RWPE1 (cell line): ENCODE measurements at regions of chr10 and their contacts with region 1.

Region 1: DNA sequence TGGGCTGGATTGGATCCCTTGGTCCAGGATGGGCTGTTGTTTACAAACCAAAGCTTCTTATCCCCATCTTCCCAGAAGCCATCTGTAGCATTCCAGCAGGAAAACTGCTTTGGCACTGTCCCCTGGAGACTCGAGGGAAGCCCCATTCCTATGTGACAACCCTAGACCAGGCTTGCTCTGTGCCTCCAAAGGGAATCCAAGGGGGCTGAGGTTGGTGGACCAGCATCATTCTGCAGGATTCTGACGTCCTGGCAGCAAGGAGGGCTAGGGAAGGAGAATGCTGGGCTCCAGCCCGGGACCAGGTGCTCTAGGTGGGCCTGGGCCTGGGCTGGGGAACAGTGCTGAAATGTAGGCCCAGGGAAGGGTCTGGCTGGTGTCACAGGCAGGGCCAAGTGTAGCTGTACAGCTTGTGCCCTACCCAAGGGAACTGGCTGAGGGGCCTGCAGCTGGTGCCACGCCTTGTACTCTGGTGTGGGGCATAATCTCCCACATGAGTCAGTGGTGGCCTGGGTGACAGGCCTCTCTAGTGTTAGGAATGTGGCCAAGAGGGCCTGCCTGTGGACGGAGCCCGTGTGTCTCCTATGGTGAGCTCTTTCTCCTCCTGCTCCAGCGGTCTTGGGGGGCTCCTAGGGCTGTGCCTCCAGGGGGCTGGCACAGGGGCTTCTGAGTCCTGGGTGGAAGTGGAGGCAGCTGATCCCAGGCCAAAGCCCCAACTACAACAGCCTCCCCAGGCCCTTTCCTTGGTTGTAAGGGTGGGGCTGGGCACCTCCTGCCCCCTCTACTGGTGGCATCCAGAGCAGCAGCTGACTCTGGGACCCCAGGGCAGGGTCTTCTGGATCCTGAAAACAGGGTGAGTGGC is 25.2 kb downstream of the TRIM8 start:
- DNase-seq: peak; percentile 47
- H3K27ac ChIP-seq: peak overlapping the region; percentile 84
- CTCF ChIP-seq: no peak

Region 2: GRCh38 chr10:102691285-102692066 is 22.0 kb after region 1 on chr10:
- CTCF ChIA-PET with region 1: no interaction called
- POLR2A ChIA-PET with region 1: no interaction called
- DNase-seq: no peak
- H3K27ac ChIP-seq: no peak overlapping the region
- CTCF ChIP-seq: no peak

Region 3: DNA sequence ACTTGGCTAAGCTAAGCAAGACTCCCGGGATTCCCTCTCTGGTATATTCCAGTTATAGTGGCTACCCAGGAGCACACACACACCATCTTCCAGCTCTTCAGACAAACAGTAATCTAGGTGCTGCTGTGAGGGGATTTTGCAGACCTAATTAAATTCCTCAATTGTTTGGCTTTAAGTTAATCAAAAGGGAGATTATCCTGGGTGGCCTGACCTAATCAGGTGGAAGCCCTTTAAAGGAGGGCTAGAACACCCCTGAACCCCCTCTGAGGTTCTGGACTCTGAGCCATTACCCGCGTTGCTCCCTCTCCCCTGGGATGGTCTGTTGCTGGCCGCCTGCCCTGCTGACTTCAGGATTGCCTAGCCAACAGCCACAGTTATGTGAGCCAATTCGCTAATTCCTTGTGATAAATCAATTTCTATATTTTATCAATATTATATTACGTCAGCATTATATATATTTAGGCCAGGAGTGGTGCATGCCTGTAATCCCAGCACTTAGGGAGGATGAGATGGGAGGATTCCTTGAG is 51.4 kb after region 1 on chr10:
- CTCF ChIA-PET with region 1: no interaction called
- POLR2A ChIA-PET with region 1: interaction called, 12 read pairs
- DNase-seq: no peak
- H3K27ac ChIP-seq: no peak overlapping the region
- CTCF ChIP-seq: no peak